Activated CD4-positive, alpha-beta memory T cell treated with anti-CD3 and anti-CD28 coated beads for 36 hours (primary cell): ENCODE measurements at regions of chr7 and their contacts with region 1.

Region 1: DNA sequence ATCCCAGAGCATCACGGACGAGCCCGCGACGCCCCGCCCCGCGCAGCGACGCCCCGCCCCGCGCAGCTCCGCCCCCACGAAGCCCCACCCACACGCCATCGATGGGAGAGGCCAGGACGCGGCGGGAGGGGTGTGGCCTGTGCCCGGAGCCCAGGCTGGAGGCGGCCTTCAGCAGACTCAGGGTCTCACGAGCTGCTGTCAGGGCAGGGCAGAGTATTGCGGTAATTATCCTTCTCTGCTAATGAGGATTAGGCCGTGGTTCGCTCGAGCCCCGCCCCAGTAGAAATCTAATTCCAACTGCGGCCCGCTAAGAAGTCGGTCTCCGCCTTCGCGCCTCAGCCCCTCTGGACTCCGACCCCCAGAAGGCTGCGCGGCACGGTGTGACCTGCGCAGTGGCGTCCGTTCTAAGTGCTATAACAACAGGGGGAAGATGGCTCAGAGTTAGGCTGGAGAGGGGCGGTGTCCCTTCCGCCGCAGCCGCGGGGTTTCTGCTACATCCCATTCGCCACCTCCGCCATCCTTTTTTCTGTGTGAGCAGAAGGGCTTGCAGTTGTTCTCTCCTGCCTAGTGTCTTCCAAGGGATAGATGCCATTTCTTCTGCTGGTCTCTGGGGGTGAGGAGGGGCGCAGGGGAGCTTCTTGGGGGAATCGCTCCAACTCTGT is 337 bp upstream of the NT5C3A start:
- DNase-seq: peak; percentile 95
- H3K4me3 Mint-ChIP-seq: peak overlapping the region; percentile 90
- H3K27ac Mint-ChIP-seq: peak overlapping the region; percentile 88
- H3K4me1 Mint-ChIP-seq: peaks cover 31% of the 10 kb centered on the region
- H3K27me3 Mint-ChIP-seq: no peaks in the 10 kb centered on the region

Region 2: DNA sequence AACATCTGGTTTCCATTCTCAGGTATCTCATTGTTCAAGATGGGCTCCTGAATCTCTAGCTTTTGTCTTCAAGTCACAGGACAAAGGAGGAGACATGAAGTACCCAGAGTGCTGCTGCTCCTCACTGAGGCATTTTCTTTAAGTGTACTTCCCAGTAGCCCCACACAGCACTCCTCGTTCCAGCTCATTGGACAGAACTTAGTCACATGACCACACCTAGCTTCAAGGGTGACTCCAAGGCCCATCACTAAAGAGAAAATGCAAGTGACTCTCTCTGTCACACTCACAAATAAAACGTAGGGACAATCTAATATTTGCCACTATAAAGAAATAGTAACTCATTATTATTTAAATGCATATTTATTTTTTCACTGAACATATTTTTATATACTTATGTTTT is 1664.1 kb before region 1 on chr7:
- CTCF ChIA-PET with region 1: no interaction called
- POLR2A ChIA-PET with region 1: no interaction called
- intact Hi-C with region 1: no loop called
- DNase-seq: no peak
- H3K4me3 Mint-ChIP-seq: no peak overlapping the region
- H3K27ac Mint-ChIP-seq: no peak overlapping the region
- H3K4me1 Mint-ChIP-seq: no peaks in the 10 kb centered on the region
- H3K27me3 Mint-ChIP-seq: no peaks in the 10 kb centered on the region

Region 3: GRCh38 chr7:32905175-32905662 is 157.7 kb before region 1 on chr7:
- CTCF ChIA-PET with region 1: no interaction called
- POLR2A ChIA-PET with region 1: no interaction called
- intact Hi-C with region 1: loop called (anchors 1 kb)
- DNase-seq: peak; percentile 89
- H3K4me3 Mint-ChIP-seq: peak overlapping the region; percentile 73
- H3K27ac Mint-ChIP-seq: peak overlapping the region; percentile 93
- H3K4me1 Mint-ChIP-seq: peaks cover 17% of the 10 kb centered on the region
- H3K27me3 Mint-ChIP-seq: no peaks in the 10 kb centered on the region

Region 4: DNA sequence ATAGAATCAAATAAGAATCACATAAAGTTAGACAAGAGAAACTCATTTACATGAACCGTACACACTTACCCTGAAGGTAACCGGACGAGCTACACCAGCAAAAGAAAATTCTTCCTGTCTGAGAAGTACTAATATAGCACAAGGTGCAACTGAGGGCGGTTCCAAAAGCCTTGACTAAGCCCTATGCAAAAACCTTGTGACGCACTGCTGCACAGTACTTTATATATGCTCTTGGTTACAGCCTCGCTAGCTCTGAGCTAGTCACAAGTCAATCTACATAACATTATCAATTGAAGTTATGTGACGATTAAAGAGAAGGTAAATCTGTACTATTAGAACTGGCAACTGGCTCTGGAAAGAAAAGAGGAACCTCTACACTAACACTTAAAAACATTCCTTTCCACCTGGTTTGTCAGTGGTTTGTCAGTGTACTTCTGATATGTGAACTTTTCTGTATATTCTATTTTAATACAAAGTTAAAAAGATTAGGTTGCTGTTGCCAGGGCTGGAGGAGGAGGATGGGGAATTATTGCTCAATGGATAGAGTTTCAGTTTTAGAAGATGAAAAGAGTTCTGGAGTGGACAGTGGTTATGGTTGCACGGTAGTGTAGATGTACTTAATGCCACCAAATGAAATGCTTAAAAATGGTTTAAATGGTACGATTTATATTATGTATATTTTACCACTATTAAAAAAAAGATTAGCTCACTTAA is 22.0 kb before region 1 on chr7:
- CTCF ChIA-PET with region 1: interaction called, 3 read pairs
- POLR2A ChIA-PET with region 1: interaction called, 8 read pairs
- intact Hi-C with region 1: loop called (anchors 1 kb)
- DNase-seq: peak; percentile 74
- H3K4me3 Mint-ChIP-seq: peak overlapping the region; percentile 58
- H3K27ac Mint-ChIP-seq: peak overlapping the region; percentile 78
- H3K4me1 Mint-ChIP-seq: peaks cover 60% of the 10 kb centered on the region
- H3K27me3 Mint-ChIP-seq: no peaks in the 10 kb centered on the region

Region 5: GRCh38 chr7:33050535-33051318 is 12.2 kb before region 1 on chr7:
- CTCF ChIA-PET with region 1: interaction called, 5 read pairs
- POLR2A ChIA-PET with region 1: no interaction called
- intact Hi-C with region 1: loop called (anchors 1 kb)
- DNase-seq: no peak
- H3K4me3 Mint-ChIP-seq: no peak overlapping the region
- H3K27ac Mint-ChIP-seq: no peak overlapping the region
- H3K4me1 Mint-ChIP-seq: peaks cover 44% of the 10 kb centered on the region
- H3K27me3 Mint-ChIP-seq: no peaks in the 10 kb centered on the region

Region 6: GRCh38 chr7:33128990-33129805 is 66.3 kb after region 1 on chr7 and contains the start of gene BBS9:
- CTCF ChIA-PET with region 1: no interaction called
- POLR2A ChIA-PET with region 1: interaction called, 3 read pairs
- intact Hi-C with region 1: loop called (anchors 1 kb)
- DNase-seq: peak; percentile 95
- H3K4me3 Mint-ChIP-seq: peak within 1 kb of the TSS; percentile 96
- H3K27ac Mint-ChIP-seq: peak within 1 kb of the TSS; percentile 78
- H3K4me1 Mint-ChIP-seq: peaks cover 18% of the 10 kb centered on the region
- H3K27me3 Mint-ChIP-seq: no peaks in the 10 kb centered on the region
- total RNA-seq, gene BBS9: 9.2 to 9.5 TPM